PC-9 (cell line): ENCODE measurements at regions of chr20 and their contacts with region 1.

Region 1: GRCh38 chr20:47356526-47357295 is at the start of gene ZMYND8:
- DNase-seq: peak; percentile 94 to 99
- H3K4me3 ChIP-seq: peak within 1 kb of the TSS; percentile 60
- H3K27ac ChIP-seq: peak within 1 kb of the TSS; percentile 99
- H3K4me1 ChIP-seq: peaks cover 86% of the 10 kb centered on the region
- H3K27me3 ChIP-seq: no peaks in the 10 kb centered on the region
- CTCF ChIP-seq: no peak
- total RNA-seq, gene ZMYND8: 72.3 and 107 TPM in 2 replicates

Region 2: GRCh38 chr20:47272893-47273590 is 83.7 kb before region 1 on chr20:
- CTCF ChIA-PET with region 1: interaction called, 4 read pairs
- POLR2A ChIA-PET with region 1: interaction called, 3 read pairs
- intact Hi-C with region 1: loop called (anchors 1 kb)
- DNase-seq: peak; percentile 53 to 58
- H3K4me3 ChIP-seq: no peak overlapping the region
- H3K27ac ChIP-seq: no peak overlapping the region
- H3K4me1 ChIP-seq: peaks cover 40% of the 10 kb centered on the region
- H3K27me3 ChIP-seq: no peaks in the 10 kb centered on the region
- CTCF ChIP-seq: peak; percentile 97

Region 3: GRCh38 chr20:47334022-47334551 is 22.6 kb before region 1 on chr20:
- CTCF ChIA-PET with region 1: interaction called, 7 read pairs
- POLR2A ChIA-PET with region 1: interaction called, 8 read pairs
- intact Hi-C with region 1: loop called (anchors 1 kb)
- DNase-seq: peak; percentile 50 to 97
- H3K4me3 ChIP-seq: peak overlapping the region; percentile 33; the same call in 1 of the 2 replicates
- H3K27ac ChIP-seq: peak overlapping the region; percentile 69
- H3K4me1 ChIP-seq: peaks cover 67% of the 10 kb centered on the region
- H3K27me3 ChIP-seq: no peaks in the 10 kb centered on the region
- CTCF ChIP-seq: no peak

Region 4: DNA sequence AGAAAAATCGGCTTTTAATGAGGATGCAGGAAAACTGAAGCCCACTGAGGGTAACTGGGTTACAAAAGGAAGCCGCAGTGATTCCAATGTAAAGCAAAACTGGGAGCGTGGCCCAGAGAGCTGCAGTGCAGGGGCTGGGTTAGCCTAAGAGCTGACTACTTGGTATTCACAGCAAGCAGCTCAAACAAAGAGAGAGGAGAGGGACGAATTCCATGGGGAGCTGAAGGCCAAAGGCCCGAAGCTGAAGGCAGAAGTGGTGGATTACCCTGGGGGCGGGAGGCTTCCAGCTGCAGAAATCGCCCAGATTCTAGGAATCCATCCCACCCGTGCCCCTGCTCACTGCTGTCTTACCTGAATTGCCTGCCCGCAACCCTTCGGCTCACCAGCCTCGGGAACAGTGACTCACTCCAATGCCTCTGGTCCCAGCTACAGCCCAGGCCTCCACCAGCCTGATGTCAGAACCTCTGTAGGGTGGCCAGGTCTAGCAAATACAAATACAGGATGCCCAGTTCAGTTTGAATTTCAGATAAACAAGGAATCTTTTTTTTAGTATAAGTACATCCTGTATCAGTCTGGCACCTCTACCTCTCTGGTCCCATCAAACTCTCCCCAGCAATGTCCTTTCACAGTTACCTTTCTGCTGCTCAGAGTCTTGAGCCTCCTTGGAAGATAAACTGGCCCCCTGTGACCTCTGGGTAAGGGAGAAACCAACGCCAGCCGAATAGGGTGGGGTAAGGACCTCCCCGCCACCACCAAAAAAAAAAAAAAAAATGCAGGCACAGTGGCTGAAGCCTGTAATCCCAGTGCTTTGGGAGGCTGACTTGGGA is 14.4 kb after region 1 on chr20:
- CTCF ChIA-PET with region 1: interaction called, 3 read pairs
- POLR2A ChIA-PET with region 1: interaction called, 8 read pairs
- intact Hi-C with region 1: loop called (anchors 2 kb)
- DNase-seq: no peak
- H3K4me3 ChIP-seq: no peak overlapping the region
- H3K27ac ChIP-seq: no peak overlapping the region
- H3K4me1 ChIP-seq: peaks cover 11% of the 10 kb centered on the region
- H3K27me3 ChIP-seq: no peaks in the 10 kb centered on the region
- CTCF ChIP-seq: no peak

Region 5: DNA sequence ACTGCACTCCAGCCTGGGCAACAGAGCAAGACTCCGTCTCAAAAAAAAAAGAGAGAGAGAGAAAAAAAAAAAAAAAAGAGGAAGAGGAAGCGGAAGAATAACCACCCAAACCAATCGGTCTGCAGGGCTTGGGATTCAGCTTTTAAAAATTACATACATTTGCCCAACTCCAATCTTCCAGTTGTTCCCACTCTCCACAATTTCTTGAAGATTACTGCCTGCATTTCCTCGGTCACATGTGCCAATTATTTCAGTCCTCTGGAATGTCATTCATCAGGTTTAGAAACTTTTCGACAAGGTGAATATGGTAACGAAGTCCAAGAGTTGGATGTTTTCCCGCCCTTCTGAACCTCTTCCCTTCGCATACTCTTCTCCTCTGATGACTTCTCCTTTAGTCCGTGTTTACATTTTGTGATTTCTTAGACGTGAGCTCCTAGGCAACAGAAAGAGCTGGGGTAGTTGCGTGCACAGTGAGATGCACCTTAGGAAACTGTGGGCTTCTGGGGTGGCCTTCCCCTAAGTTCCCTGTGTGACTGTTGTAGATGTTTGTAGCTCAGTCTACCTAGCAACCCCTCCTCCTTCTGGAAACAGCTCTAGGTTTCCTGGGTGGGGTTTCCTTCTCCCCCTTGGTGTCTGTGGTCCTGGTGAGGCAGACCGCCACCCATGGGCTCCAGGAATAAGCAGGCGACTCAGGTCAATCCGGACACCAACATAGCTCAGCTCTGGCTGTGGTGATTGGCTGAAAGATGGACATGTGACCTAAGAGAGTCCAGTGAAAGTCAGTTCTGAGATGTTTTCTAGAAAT is 82.1 kb after region 1 on chr20:
- CTCF ChIA-PET with region 1: no interaction called
- POLR2A ChIA-PET with region 1: interaction called, 10 read pairs
- intact Hi-C with region 1: loop called (anchors 1 kb)
- DNase-seq: peak; percentile 67 to 94
- H3K4me3 ChIP-seq: 0 out of 2 replicates have a peak overlapping the region, but pooled peaks have one; percentile 1
- H3K27ac ChIP-seq: peak overlapping the region; percentile 78
- H3K4me1 ChIP-seq: peaks cover 58% of the 10 kb centered on the region
- H3K27me3 ChIP-seq: no peaks in the 10 kb centered on the region
- CTCF ChIP-seq: no peak

Region 6: GRCh38 chr20:47568001-47568407 is 211.3 kb after region 1 on chr20:
- CTCF ChIA-PET with region 1: interaction called, 3 read pairs
- POLR2A ChIA-PET with region 1: interaction called, 15 read pairs
- intact Hi-C with region 1: no loop called
- DNase-seq: peak; percentile 71 to 83
- H3K4me3 ChIP-seq: no peak overlapping the region
- H3K27ac ChIP-seq: peak overlapping the region; percentile 61
- H3K4me1 ChIP-seq: peaks cover 58% of the 10 kb centered on the region
- H3K27me3 ChIP-seq: no peaks in the 10 kb centered on the region
- CTCF ChIP-seq: no peak